ENCODE measurements at regions of chr1 and their contacts with region 1.

Region 1: DNA sequence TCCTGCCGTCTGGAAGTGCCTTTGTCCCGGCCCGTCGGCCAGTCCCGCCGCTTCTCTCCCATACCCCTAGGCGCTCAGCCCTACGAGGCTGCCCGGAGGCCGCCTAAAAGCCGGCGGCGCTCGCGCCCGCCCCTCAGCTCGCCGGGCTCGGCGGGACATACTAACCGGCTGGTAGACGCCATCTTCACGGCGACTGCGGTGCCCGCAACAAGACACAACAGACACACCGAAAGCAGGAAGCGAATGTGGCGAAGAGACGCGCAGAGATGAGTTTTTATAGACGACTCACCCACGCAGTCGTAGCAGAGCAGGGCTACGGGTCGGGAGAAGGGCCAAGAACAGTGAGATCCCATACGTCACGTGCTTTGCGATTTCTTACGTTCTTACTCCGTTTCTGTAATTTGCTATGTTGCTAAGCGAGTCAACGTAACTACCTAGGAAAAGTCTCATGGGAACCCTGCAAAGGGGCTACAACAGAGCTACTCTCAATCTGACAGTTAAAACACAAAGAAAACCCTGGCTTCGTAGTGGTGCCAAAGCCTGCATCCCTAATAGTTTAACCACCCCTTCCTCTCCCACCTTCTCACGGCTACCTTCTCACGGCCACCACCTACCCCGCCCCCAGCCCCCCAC is at the start of gene GTF2B:
- DNase-seq: peak; percentile 88 to 98 (median 92)
- ATAC-seq: peak; percentile 85
- H3K4me3 ChIP-seq: peak within 1 kb of the TSS; percentile 86
- H3K4me3 Mint-ChIP-seq: peak within 1 kb of the TSS; percentile 96
- H3K27ac ChIP-seq: peak within 1 kb of the TSS; percentile 90 to 93
- H3K27ac Mint-ChIP-seq: peak within 1 kb of the TSS; percentile 91
- H3K4me1 ChIP-seq: peaks cover 18% of the 10 kb centered on the region
- H3K4me1 Mint-ChIP-seq: peaks cover 49% of the 10 kb centered on the region
- H3K27me3 ChIP-seq: no peaks in the 10 kb centered on the region
- H3K27me3 Mint-ChIP-seq: no peaks in the 10 kb centered on the region
- CTCF ChIP-seq: no peak
- total RNA-seq, gene GTF2B: 82.6 to 86.4 TPM

Region 2: DNA sequence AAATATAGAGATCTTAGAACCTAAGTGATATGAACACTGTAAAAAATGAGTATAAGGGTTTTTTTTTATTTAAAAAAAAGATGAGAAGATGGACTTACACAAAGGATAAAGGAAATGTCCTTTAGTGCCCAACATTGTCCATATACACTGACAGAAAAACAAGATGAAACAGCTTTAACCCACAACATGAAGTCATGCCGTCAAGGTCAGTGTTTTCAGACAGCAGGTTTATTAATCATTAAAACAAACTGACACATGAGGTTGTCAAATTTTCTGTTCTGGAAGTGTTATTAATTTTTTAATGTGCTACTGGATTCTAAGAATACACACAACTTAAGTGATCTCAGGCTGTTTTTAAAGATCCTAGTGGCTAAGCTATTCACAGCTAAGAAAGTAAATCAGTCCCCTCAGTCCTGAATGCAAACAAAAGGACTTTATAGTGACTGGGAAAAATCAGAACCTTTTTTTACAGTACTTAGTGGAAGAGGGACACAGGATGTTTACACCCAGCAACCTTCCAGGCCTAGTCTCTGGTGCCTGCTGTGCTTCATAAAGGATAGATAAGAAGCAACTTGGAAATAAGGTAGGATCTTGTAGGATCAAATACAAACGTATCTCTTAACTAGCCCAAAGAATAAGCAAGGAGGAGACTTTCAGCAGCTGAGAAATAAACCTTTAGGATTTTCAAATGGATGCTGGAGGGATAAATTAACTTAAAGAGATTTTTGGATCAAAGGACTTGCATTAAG is 229.3 kb before region 1 on chr1:
- CTCF ChIA-PET with region 1: no interaction called
- POLR2A ChIA-PET with region 1: interaction called, 10 read pairs
- intact Hi-C with region 1: no loop called
- DNase-seq: no peak
- ATAC-seq: no peak
- H3K4me3 ChIP-seq: no peak overlapping the region
- H3K4me3 Mint-ChIP-seq: no peak overlapping the region
- H3K27ac ChIP-seq: no peak overlapping the region
- H3K27ac Mint-ChIP-seq: peak overlapping the region; percentile 48
- H3K4me1 ChIP-seq: peaks cover 7% of the 10 kb centered on the region
- H3K4me1 Mint-ChIP-seq: peaks cover 36% of the 10 kb centered on the region
- H3K27me3 ChIP-seq: no peaks in the 10 kb centered on the region
- H3K27me3 Mint-ChIP-seq: peaks cover 4% of the 10 kb centered on the region
- CTCF ChIP-seq: no peak

Region 3: GRCh38 chr1:88877382-88877825 is 14.0 kb before region 1 on chr1:
- CTCF ChIA-PET with region 1: interaction called, 6 read pairs
- POLR2A ChIA-PET with region 1: interaction called, 39 read pairs
- intact Hi-C with region 1: no loop called
- DNase-seq: peak in 3 of 14 experiments; percentile 32 to 38 (median 35)
- ATAC-seq: no peak
- H3K4me3 ChIP-seq: no peak overlapping the region
- H3K4me3 Mint-ChIP-seq: peak overlapping the region; percentile 34
- H3K27ac ChIP-seq: no peak overlapping the region
- H3K27ac Mint-ChIP-seq: peak overlapping the region; percentile 44
- H3K4me1 ChIP-seq: peaks cover 16% of the 10 kb centered on the region
- H3K4me1 Mint-ChIP-seq: peaks cover 69% of the 10 kb centered on the region
- H3K27me3 ChIP-seq: no peaks in the 10 kb centered on the region
- H3K27me3 Mint-ChIP-seq: no peaks in the 10 kb centered on the region
- CTCF ChIP-seq: peak; percentile 90

Region 4: GRCh38 chr1:88910401-88910800 is 19.0 kb after region 1 on chr1:
- CTCF ChIA-PET with region 1: no interaction called
- POLR2A ChIA-PET with region 1: no interaction called
- intact Hi-C with region 1: no loop called
- DNase-seq: no peak
- ATAC-seq: no peak
- H3K4me3 ChIP-seq: no peak overlapping the region
- H3K4me3 Mint-ChIP-seq: no peak overlapping the region
- H3K27ac ChIP-seq: no peak overlapping the region
- H3K27ac Mint-ChIP-seq: no peak overlapping the region
- H3K4me1 ChIP-seq: no peaks in the 10 kb centered on the region
- H3K4me1 Mint-ChIP-seq: peaks cover 15% of the 10 kb centered on the region
- H3K27me3 ChIP-seq: no peaks in the 10 kb centered on the region
- H3K27me3 Mint-ChIP-seq: no peaks in the 10 kb centered on the region
- CTCF ChIP-seq: no peak

Region 5: DNA sequence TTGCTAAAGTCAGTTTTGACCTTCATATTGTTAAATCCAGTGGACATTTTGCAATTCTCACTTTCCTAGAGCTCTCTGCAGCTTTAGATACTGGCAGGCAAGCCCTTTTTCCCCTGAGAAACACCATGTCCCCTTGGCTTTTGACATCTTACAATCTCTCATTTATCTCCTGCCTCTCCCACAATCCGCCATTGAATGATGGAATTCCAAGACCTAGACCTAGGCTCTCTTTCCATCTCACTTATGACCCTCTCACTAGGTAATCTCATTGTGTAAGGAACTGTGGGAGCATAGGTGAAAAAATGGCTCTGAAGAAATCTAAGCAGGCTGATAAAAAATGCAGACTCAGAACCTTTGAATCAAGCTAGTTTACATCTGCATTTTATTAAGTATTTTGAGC is 99.0 kb after region 1 on chr1:
- CTCF ChIA-PET with region 1: no interaction called
- POLR2A ChIA-PET with region 1: interaction called, 5 read pairs
- intact Hi-C with region 1: loop called in 1 of 2 experiments (anchors 2 kb)
- DNase-seq: no peak
- ATAC-seq: no peak
- H3K4me3 ChIP-seq: no peak overlapping the region
- H3K4me3 Mint-ChIP-seq: peak overlapping the region; percentile 21
- H3K27ac ChIP-seq: no peak overlapping the region
- H3K27ac Mint-ChIP-seq: no peak overlapping the region
- H3K4me1 ChIP-seq: peaks cover 21% of the 10 kb centered on the region
- H3K4me1 Mint-ChIP-seq: peaks cover 48% of the 10 kb centered on the region
- H3K27me3 ChIP-seq: no peaks in the 10 kb centered on the region
- H3K27me3 Mint-ChIP-seq: no peaks in the 10 kb centered on the region
- CTCF ChIP-seq: no peak

Region 6: DNA sequence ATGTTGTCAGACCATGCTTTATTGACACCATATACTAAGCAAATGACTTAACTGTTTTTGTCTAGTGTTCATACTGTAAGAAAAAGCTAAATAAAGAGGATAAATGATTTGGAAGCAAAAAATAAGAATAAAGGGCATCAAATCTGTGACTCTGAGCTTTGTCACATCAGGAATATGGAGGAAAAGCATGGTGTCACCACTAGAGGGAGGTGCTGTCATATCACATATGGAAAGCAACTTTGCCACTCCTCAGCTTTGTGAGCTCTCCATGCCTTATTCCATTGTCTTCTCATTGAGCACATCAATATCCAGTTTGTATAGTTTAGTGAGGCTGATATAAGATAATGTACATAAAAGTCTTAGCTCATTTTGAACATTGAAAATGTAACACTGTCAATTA is 194.3 kb after region 1 on chr1:
- CTCF ChIA-PET with region 1: no interaction called
- POLR2A ChIA-PET with region 1: no interaction called
- intact Hi-C with region 1: no loop called
- DNase-seq: peak in 9 of 14 experiments; percentile 13 to 79 (median 48)
- ATAC-seq: peak; percentile 77
- H3K4me3 ChIP-seq: no peak overlapping the region
- H3K4me3 Mint-ChIP-seq: no peak overlapping the region
- H3K27ac ChIP-seq: no peak overlapping the region
- H3K27ac Mint-ChIP-seq: no peak overlapping the region
- H3K4me1 ChIP-seq: no peaks in the 10 kb centered on the region
- H3K4me1 Mint-ChIP-seq: no peaks in the 10 kb centered on the region
- H3K27me3 ChIP-seq: no peaks in the 10 kb centered on the region
- H3K27me3 Mint-ChIP-seq: no peaks in the 10 kb centered on the region
- CTCF ChIP-seq: peak; percentile 85

Region 7: DNA sequence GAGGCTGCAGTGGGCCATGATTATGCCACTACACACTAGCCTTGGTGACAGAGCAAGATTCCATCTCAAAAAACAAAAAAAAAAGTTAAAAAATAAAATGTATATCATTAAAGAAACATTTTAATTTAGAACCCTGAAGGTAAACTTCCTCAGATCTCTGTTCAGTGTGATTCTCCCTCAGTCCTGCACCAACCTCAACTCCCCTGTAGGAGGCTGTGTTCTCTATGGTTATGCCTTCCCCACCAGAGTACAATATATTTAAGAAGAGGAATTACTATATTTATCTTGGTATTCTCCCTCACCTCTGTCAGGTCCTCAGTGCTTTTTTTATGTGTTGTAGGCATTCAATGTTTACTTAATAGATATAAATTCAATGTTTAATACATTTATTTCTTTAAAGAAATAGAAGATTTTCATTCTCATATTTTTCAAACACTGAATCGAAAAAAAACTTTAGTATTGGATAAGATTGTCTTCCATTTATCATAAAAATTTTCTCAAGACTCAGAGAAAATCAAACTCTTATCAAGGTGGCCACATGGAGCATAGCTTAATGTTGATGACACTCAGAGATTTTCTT is 628.4 kb after region 1 on chr1:
- CTCF ChIA-PET with region 1: no interaction called
- POLR2A ChIA-PET with region 1: no interaction called
- intact Hi-C with region 1: no loop called
- DNase-seq: peak; percentile 11 to 77 (median 26)
- ATAC-seq: peak; percentile 59
- H3K4me3 ChIP-seq: no peak overlapping the region
- H3K4me3 Mint-ChIP-seq: no peak overlapping the region
- H3K27ac ChIP-seq: no peak overlapping the region
- H3K27ac Mint-ChIP-seq: no peak overlapping the region
- H3K4me1 ChIP-seq: peaks cover 11% of the 10 kb centered on the region
- H3K4me1 Mint-ChIP-seq: peaks cover 14% of the 10 kb centered on the region
- H3K27me3 ChIP-seq: no peaks in the 10 kb centered on the region
- H3K27me3 Mint-ChIP-seq: no peaks in the 10 kb centered on the region
- CTCF ChIP-seq: peak; percentile 83

Region 8: DNA sequence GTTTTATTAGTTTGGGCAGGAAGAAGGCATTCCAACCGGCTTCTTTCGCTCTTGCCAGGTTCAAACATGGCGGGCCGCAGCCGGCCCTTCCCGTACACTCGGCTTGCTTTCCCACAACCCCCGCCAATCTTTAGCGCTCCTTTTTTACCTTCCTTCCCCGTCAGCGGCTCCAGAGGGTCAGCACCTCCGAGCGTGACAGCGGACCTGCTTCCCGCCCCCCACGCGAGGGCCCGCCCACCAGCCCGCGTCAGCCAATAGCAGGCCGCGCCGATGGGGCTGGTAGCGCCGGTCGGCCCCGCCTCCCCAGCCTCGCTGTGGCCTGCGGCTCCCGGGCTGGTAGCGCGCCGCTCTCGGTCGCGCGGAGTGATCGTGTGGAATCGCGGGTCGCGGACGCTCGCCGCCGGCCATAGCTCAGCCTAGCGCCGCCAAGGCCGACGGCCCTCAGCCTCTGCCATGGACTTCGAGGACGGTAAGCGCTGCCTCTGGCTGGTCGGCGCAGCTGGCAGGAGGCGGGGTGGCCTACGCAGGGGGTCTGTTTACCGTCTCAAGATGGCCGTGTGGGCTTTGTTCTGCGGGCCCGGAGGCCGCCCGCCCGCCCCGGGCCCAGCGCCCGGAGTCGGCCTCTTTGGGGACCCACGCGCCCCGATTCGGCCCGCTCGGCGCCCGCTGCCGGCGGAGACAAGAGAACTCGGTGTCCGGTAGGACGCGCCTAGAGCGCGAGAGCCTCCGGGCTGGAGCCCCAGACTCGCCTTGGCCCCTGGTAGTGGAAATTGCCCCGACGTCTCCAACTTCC is 1103.6 kb after region 1 on chr1 and contains the start of gene ZNF326:
- CTCF ChIA-PET with region 1: no interaction called
- POLR2A ChIA-PET with region 1: interaction called, 3 read pairs
- intact Hi-C with region 1: loop called in 1 of 2 experiments (anchors 5 kb)
- DNase-seq: peak; percentile 83 to 96 (median 92)
- ATAC-seq: peak; percentile 96
- H3K4me3 ChIP-seq: peak within 1 kb of the TSS; percentile 89
- H3K4me3 Mint-ChIP-seq: peak within 1 kb of the TSS; percentile 98
- H3K27ac ChIP-seq: peak within 1 kb of the TSS; percentile 64 to 70
- H3K27ac Mint-ChIP-seq: peak within 1 kb of the TSS; percentile 95
- H3K4me1 ChIP-seq: peaks cover 17% of the 10 kb centered on the region
- H3K4me1 Mint-ChIP-seq: peaks cover 47% of the 10 kb centered on the region
- H3K27me3 ChIP-seq: no peaks in the 10 kb centered on the region
- H3K27me3 Mint-ChIP-seq: no peaks in the 10 kb centered on the region
- CTCF ChIP-seq: no peak
- total RNA-seq, gene ZNF326: 56.2 to 58.7 TPM